PC-9 (cell line): ENCODE measurements at regions of chr3 and their contacts with region 1.

Region 1: DNA sequence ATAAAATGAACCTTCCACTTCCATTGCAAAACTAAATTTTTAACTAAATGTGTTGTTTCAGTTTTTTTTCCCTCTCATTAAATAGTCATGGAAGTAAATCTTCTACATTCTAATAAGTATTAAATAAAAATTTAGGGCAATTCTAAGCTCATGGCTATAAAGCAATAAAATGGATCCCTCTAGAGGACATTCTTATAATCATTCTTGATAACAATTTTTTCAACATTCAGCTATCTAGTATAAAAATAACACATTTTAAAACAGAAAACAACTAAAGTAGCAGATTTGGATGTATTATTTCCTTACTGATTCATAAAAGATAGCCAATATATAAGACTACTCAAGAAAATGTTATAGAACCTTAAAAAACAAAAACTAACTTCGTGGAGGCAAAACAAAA is 393.1 kb downstream of the PLOD2 start:
- DNase-seq: no peak
- H3K4me3 ChIP-seq: no peak overlapping the region
- H3K27ac ChIP-seq: no peak overlapping the region
- H3K4me1 ChIP-seq: no peaks in the 10 kb centered on the region
- H3K27me3 ChIP-seq: no peaks in the 10 kb centered on the region
- CTCF ChIP-seq: peak; percentile 62

Region 2: DNA sequence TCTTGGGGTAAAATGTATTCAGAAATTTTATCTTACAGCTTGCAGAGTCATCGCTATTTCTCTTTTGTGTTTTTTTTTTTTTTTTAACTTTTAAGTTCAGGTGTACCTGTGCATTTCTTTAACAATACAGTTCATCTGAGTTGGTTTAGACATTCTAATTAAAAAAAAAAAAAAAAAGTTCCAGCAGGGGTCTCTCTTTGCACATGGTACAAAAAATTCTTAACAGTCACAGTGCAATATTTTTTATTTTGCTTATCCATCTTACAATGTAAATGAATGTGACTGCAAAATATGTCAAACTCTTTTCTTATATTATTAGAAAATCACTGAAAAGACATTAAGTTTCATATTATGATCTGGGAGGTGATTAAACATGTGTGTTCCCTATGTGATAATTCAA is 1872.1 kb before region 1 on chr3:
- CTCF ChIA-PET with region 1: no interaction called
- POLR2A ChIA-PET with region 1: no interaction called
- intact Hi-C with region 1: loop called (anchors 5 kb)
- DNase-seq: no peak
- H3K4me3 ChIP-seq: no peak overlapping the region
- H3K27ac ChIP-seq: no peak overlapping the region
- H3K4me1 ChIP-seq: no peaks in the 10 kb centered on the region
- H3K27me3 ChIP-seq: no peaks in the 10 kb centered on the region
- CTCF ChIP-seq: peak; percentile 51

Region 3: GRCh38 chr3:145170121-145170520 is 597.8 kb before region 1 on chr3:
- CTCF ChIA-PET with region 1: no interaction called
- POLR2A ChIA-PET with region 1: interaction called, 10 read pairs
- intact Hi-C with region 1: no loop called
- DNase-seq: no peak
- H3K4me3 ChIP-seq: no peak overlapping the region
- H3K27ac ChIP-seq: no peak overlapping the region
- H3K4me1 ChIP-seq: no peaks in the 10 kb centered on the region
- H3K27me3 ChIP-seq: no peaks in the 10 kb centered on the region
- CTCF ChIP-seq: no peak

Region 4: GRCh38 chr3:145294572-145294971 is 473.3 kb before region 1 on chr3:
- CTCF ChIA-PET with region 1: no interaction called
- POLR2A ChIA-PET with region 1: no interaction called
- intact Hi-C with region 1: loop called (anchors 10 kb)
- DNase-seq: no peak
- H3K4me3 ChIP-seq: no peak overlapping the region
- H3K27ac ChIP-seq: no peak overlapping the region
- H3K4me1 ChIP-seq: no peaks in the 10 kb centered on the region
- H3K27me3 ChIP-seq: no peaks in the 10 kb centered on the region
- CTCF ChIP-seq: no peak

Region 5: DNA sequence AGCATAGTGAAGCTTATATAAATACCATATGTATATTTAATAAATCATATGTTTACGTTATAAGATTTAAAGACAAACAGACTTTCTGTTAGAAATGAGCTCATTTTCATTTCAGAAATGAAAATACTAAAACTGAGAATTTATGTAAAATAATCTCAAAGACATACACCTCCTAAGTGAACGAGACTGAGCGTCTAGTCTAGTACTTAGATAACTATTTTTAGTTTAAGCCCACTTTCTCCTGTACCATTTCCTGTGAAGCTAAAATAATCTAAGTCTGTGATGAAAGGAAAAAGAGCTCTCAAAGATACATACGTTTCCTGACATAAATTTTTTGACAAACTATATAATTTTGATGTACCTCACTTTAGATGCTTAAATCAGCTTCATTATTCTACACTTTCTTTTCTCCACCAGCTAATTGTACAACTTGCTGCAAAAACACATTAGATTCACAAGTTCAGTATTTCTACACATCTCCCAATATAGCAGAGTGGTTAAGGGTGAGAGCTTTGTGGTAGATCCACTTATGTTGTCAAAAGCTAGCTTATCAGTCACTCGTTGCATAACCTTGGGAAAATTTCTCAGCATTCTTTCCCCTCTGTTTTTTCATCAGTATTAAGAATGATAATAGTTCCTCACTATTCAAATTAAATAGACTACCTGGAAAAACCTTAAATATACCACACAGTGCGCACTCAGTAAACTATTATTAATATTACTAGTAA is 309.9 kb before region 1 on chr3:
- CTCF ChIA-PET with region 1: no interaction called
- POLR2A ChIA-PET with region 1: no interaction called
- intact Hi-C with region 1: no loop called
- DNase-seq: no peak
- H3K4me3 ChIP-seq: no peak overlapping the region
- H3K27ac ChIP-seq: no peak overlapping the region
- H3K4me1 ChIP-seq: no peaks in the 10 kb centered on the region
- H3K27me3 ChIP-seq: no peaks in the 10 kb centered on the region
- CTCF ChIP-seq: no peak

Region 6: DNA sequence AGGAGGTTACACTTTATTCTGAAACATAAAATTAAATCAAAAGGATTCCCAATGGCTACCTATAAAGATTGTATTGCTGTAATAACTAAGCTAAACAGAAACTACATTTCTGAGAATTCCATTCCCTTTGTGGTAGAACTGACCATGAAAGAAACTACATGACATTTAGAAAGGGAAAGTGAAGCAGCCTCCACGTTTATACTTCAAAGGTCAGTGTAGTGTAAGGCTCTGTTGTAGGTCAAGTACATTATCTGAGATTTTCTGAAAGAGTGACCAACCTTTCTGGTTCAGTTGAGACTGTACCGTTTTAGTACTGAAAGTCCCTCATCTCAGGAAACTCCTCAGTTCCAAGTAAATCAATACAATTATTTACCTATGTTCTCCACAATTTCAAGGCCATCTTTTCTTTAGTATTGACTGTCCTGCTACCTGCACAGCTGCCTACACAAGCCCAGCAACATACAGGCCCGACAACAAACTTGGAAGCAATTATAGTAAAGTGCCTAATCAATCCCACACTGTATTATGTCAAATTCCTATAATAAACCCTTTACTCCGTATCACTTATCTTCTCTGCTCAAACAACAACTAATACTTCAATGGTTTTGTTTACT is 50.1 kb after region 1 on chr3:
- CTCF ChIA-PET with region 1: no interaction called
- POLR2A ChIA-PET with region 1: no interaction called
- intact Hi-C with region 1: no loop called
- DNase-seq: no peak
- H3K4me3 ChIP-seq: no peak overlapping the region
- H3K27ac ChIP-seq: no peak overlapping the region
- H3K4me1 ChIP-seq: no peaks in the 10 kb centered on the region
- H3K27me3 ChIP-seq: no peaks in the 10 kb centered on the region
- CTCF ChIP-seq: no peak